Naive thymus-derived CD4-positive, alpha-beta T cell (primary cell): ENCODE measurements at regions of chr9 and their contacts with region 1.

Region 1: GRCh38 chr9:72364679-72365524 is at the start of gene ZFAND5:
- DNase-seq: peak; percentile 88 to 93 (median 90)
- ATAC-seq: peak; percentile 90
- H3K4me3 ChIP-seq: peak within 1 kb of the TSS; percentile 89
- H3K4me3 Mint-ChIP-seq: peak within 1 kb of the TSS; percentile 91 to 99 (median 96)
- H3K27ac ChIP-seq: peak within 1 kb of the TSS; percentile 94
- H3K27ac Mint-ChIP-seq: peak within 1 kb of the TSS; percentile 97 to 99 (median 99)
- H3K4me1 ChIP-seq: peaks cover 24 to 30% of the 10 kb centered on the region in 2 donors
- H3K4me1 Mint-ChIP-seq: peaks cover 16 to 47% (median 44%) of the 10 kb centered on the region in 7 donors
- H3K27me3 ChIP-seq: no peaks in the 10 kb centered on the region
- H3K27me3 Mint-ChIP-seq: no peaks in the 10 kb centered on the region
- total RNA-seq, gene ZFAND5: 82.4 to 466 (median 155) TPM

Region 2: GRCh38 chr9:71683598-71684235 is 681.2 kb before region 1 on chr9:
- CTCF ChIA-PET with region 1: no interaction called
- POLR2A ChIA-PET with region 1: no interaction called
- intact Hi-C with region 1: loop called in 1 of 2 experiments (anchors 5 kb)
- DNase-seq: no peak
- ATAC-seq: peak; percentile 64
- H3K4me3 ChIP-seq: no peak overlapping the region
- H3K4me3 Mint-ChIP-seq: peak overlapping the region in 6 of 10 donors; percentile 9 to 72 (median 37)
- H3K27ac ChIP-seq: no peak overlapping the region
- H3K27ac Mint-ChIP-seq: peak overlapping the region in 4 of 9 donors; percentile 26 to 70 (median 60)
- H3K4me1 ChIP-seq: peaks cover 20 to 31% of the 10 kb centered on the region in 2 donors
- H3K4me1 Mint-ChIP-seq: peaks cover 30 to 62% (median 57%) of the 10 kb centered on the region in 7 donors
- H3K27me3 ChIP-seq: no peaks in the 10 kb centered on the region
- H3K27me3 Mint-ChIP-seq: no peaks in the 10 kb centered on the region

Region 3: GRCh38 chr9:72292256-72292682 is 72.6 kb before region 1 on chr9:
- CTCF ChIA-PET with region 1: no interaction called
- POLR2A ChIA-PET with region 1: no interaction called
- intact Hi-C with region 1: loop called in 1 of 2 experiments (anchors 2 kb)
- DNase-seq: peak in 5 of 9 donors; percentile 12 to 35 (median 27)
- ATAC-seq: peak; percentile 60
- H3K4me3 ChIP-seq: no peak overlapping the region
- H3K4me3 Mint-ChIP-seq: no peak overlapping the region
- H3K27ac ChIP-seq: no peak overlapping the region
- H3K27ac Mint-ChIP-seq: no peak overlapping the region
- H3K4me1 ChIP-seq: no peaks in the 10 kb centered on the region
- H3K4me1 Mint-ChIP-seq: peaks cover 0 to 7% (median 0%) of the 10 kb centered on the region in 7 donors
- H3K27me3 ChIP-seq: no peaks in the 10 kb centered on the region
- H3K27me3 Mint-ChIP-seq: peaks cover 0 to 21% (median 6%) of the 10 kb centered on the region in 5 donors

Region 4: DNA sequence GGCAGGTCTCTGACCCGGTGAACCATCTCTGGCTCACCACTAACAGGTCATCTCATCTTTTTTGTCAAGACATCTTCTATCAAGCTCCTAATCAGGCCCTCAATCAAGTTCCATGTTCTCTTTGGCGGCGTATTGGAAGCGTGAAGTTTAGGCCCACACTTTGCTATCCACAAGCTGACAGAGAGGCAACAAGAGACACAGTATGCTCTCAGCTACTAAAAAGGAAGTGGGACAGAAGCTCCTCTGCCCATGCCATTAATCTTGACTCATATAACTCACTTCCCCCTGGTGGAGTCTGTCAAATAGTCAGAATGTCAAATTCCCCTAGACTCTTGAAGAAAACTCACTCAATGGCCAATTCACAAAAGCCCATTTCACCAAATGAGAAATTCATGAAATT is 79.0 kb after region 1 on chr9:
- CTCF ChIA-PET with region 1: interaction called, 3 read pairs
- POLR2A ChIA-PET with region 1: no interaction called
- intact Hi-C with region 1: loop called (anchors 1 to 2 kb)
- DNase-seq: no peak
- ATAC-seq: peak; percentile 80
- H3K4me3 ChIP-seq: no peak overlapping the region
- H3K4me3 Mint-ChIP-seq: peak overlapping the region in 2 of 10 donors; percentile 45 to 58
- H3K27ac ChIP-seq: no peak overlapping the region
- H3K27ac Mint-ChIP-seq: peak overlapping the region in 3 of 9 donors; percentile 28 to 80 (median 61)
- H3K4me1 ChIP-seq: peaks cover 0 to 11% of the 10 kb centered on the region in 2 donors
- H3K4me1 Mint-ChIP-seq: peaks cover 4 to 44% (median 14%) of the 10 kb centered on the region in 7 donors
- H3K27me3 ChIP-seq: no peaks in the 10 kb centered on the region
- H3K27me3 Mint-ChIP-seq: peaks cover 0 to 2% (median 0%) of the 10 kb centered on the region in 5 donors

Region 5: GRCh38 chr9:72592502-72593403 is 227.9 kb after region 1 on chr9:
- CTCF ChIA-PET with region 1: interaction called, 4 read pairs
- POLR2A ChIA-PET with region 1: interaction called, 10 read pairs
- intact Hi-C with region 1: loop called (anchors 1 kb)
- DNase-seq: peak in 7 of 9 donors; percentile 11 to 60 (median 47)
- ATAC-seq: peak; percentile 80
- H3K4me3 ChIP-seq: no peak overlapping the region
- H3K4me3 Mint-ChIP-seq: no peak overlapping the region
- H3K27ac ChIP-seq: no peak overlapping the region
- H3K27ac Mint-ChIP-seq: no peak overlapping the region
- H3K4me1 ChIP-seq: no peaks in the 10 kb centered on the region
- H3K4me1 Mint-ChIP-seq: peaks cover 0 to 50% (median 6%) of the 10 kb centered on the region in 7 donors
- H3K27me3 ChIP-seq: no peaks in the 10 kb centered on the region
- H3K27me3 Mint-ChIP-seq: peaks cover 0 to 5% (median 2%) of the 10 kb centered on the region in 5 donors